PC-9 (cell line): ENCODE measurements at regions of chr21 and their contacts with region 1.

Region 1: GRCh38 chr21:41816220-41817165 is 49.6 kb upstream of the RIPK4 start:
- DNase-seq: peak in 1 of 2 experiments; percentile 19
- H3K4me3 ChIP-seq: no peak overlapping the region
- H3K27ac ChIP-seq: peak overlapping the region; percentile 65
- H3K4me1 ChIP-seq: peaks cover 9% of the 10 kb centered on the region
- H3K27me3 ChIP-seq: no peaks in the 10 kb centered on the region
- CTCF ChIP-seq: no peak

Region 2: GRCh38 chr21:40768056-40768455 is 1048.4 kb before region 1 on chr21:
- CTCF ChIA-PET with region 1: no interaction called
- POLR2A ChIA-PET with region 1: no interaction called
- intact Hi-C with region 1: no loop called
- DNase-seq: no peak
- H3K4me3 ChIP-seq: no peak overlapping the region
- H3K27ac ChIP-seq: no peak overlapping the region
- H3K4me1 ChIP-seq: no peaks in the 10 kb centered on the region
- H3K27me3 ChIP-seq: 0 out of 2 replicates have a peak, but pooled peaks cover 9% of the 10 kb centered on the region
- CTCF ChIP-seq: no peak

Region 3: DNA sequence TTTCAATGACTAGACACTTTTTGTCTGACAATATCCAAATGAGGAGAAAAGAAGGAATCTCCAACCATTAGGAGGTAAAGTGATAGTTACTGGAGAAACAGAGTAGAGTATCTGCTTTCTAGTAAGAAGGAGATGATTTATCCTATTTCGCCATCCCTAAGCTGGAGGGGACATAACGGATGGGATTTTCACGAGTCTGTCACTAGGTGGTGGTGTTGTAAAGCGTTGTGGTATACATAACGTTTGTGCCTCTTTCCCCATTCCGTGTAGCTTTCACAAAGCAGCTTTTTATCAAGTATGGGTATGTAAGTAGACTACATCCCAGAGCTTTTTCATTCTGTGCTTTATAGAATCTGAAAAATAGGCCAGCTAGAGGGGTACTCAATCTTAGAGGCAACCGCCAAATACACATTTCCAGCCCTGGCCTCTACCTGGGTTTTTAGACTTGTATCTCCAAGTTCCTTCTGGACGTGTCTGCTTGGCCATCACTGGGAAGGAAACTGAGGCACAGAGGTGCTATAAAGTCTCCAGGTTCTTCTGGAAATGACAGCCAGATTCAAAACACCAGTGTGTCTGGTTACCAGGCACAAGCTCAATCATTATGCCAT is 533.2 kb before region 1 on chr21:
- CTCF ChIA-PET with region 1: interaction called, 4 read pairs
- POLR2A ChIA-PET with region 1: no interaction called
- intact Hi-C with region 1: loop called (anchors 2 kb)
- DNase-seq: peak; percentile 43 to 69
- H3K4me3 ChIP-seq: no peak overlapping the region
- H3K27ac ChIP-seq: no peak overlapping the region
- H3K4me1 ChIP-seq: no peaks in the 10 kb centered on the region
- H3K27me3 ChIP-seq: no peaks in the 10 kb centered on the region
- CTCF ChIP-seq: peak; percentile 76

Region 4: GRCh38 chr21:41477641-41478318 is 338.7 kb before region 1 on chr21:
- CTCF ChIA-PET with region 1: no interaction called
- POLR2A ChIA-PET with region 1: no interaction called
- intact Hi-C with region 1: loop called (anchors 2 kb)
- DNase-seq: peak; percentile 40 to 49
- H3K4me3 ChIP-seq: no peak overlapping the region
- H3K27ac ChIP-seq: peak overlapping the region; percentile 23; the same call in 1 of the 2 replicates
- H3K4me1 ChIP-seq: peaks cover 11% of the 10 kb centered on the region
- H3K27me3 ChIP-seq: no peaks in the 10 kb centered on the region
- CTCF ChIP-seq: no peak

Region 5: GRCh38 chr21:41726945-41727783 is 89.3 kb before region 1 on chr21:
- CTCF ChIA-PET with region 1: no interaction called
- POLR2A ChIA-PET with region 1: no interaction called
- intact Hi-C with region 1: loop called (anchors 1 kb)
- DNase-seq: peak; percentile 89 to 93
- H3K4me3 ChIP-seq: peak overlapping the region; percentile 27; the same call in 1 of the 2 replicates
- H3K27ac ChIP-seq: peak overlapping the region; percentile 93
- H3K4me1 ChIP-seq: peaks cover 56% of the 10 kb centered on the region
- H3K27me3 ChIP-seq: no peaks in the 10 kb centered on the region
- CTCF ChIP-seq: peak; percentile 37; the same call in 1 of the 2 replicates

Region 6: DNA sequence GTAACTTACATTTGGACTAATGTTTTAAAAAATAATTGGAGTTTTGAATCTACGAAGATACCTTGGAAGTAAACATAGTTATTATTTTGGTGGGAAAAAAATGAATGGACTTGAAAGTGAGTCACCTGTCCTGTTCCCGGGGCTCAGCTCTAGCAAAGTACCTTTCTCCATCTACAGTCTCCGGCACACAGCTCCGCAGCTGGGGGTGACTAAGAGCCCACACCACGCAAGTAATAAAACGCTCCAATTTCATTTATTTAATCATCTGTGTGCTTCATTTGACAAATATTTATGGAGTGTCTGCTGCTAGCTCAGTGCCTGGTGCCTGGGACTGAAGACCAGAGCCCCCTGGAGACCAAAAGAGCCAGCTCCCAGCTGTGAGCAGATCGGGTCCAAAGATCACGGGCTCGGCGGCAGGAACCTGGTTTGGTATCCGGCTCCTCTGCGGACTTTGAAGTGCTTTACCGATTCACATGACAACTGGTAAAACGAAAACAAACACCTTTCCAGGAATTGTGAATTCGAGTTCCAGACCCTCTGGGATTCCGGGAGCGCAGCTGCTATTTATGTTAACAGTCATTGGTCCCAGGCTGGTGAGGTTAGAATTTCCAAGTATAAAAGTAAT is 47.9 kb before region 1 on chr21:
- CTCF ChIA-PET with region 1: no interaction called
- POLR2A ChIA-PET with region 1: no interaction called
- intact Hi-C with region 1: loop called (anchors 2 kb)
- DNase-seq: peak; percentile 28 to 80
- H3K4me3 ChIP-seq: peak overlapping the region; percentile 100
- H3K27ac ChIP-seq: peak overlapping the region; percentile 99
- H3K4me1 ChIP-seq: peaks cover 12% of the 10 kb centered on the region
- H3K27me3 ChIP-seq: no peaks in the 10 kb centered on the region
- CTCF ChIP-seq: no peak; the same call in 1 of the 2 replicates

Region 7: DNA sequence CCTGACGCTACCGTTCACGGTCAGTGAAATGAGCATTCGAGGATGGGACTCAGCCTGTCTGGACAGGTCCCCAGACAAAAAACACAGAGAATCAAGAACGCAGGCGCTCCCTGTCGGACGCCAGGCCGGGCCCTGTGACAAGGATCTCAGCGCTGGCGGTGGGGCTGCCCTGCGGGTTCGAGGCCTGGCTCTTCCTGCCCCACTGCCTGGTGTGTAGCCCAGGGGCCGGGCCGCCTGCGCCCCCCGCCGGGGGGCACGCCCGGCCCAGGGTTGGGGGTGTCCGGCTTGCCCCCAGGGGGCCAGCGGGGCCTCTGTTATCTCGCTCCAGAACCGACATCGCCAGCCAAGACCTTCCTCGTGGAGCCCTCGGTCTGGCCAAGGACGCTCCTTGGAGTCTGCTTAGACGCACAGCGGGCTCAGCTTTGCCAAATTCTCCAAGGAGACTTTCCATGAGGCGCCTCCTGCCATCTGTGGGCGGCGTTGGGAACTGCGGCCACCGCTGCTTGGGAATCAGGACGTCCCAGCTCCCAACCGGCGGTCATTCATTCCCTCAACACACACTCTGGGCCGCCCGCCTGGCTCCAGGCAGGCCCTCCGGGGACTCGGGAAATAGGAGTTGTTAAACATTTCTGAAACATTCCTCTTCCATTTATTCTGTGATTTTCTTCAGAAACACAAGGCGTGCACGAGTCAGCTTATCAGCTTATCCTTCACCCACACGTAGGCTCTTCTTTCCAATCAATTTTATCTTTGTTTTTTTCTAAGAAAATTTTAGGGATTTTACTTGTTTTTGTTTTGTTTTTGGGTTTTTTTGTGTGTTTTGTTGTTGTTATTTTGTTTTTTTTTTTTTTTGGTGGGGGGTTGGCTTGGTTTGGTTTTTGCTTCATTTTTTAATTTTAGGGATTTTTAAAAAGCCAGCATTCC is 38.3 kb before region 1 on chr21:
- CTCF ChIA-PET with region 1: interaction called, 16 read pairs
- POLR2A ChIA-PET with region 1: no interaction called
- intact Hi-C with region 1: loop called (anchors 2 kb)
- DNase-seq: peak; percentile 62 to 81
- H3K4me3 ChIP-seq: no peak overlapping the region
- H3K27ac ChIP-seq: peak overlapping the region; percentile 13; the same call in 1 of the 2 replicates
- H3K4me1 ChIP-seq: peaks cover 42% of the 10 kb centered on the region
- H3K27me3 ChIP-seq: no peaks in the 10 kb centered on the region
- CTCF ChIP-seq: peak; percentile 75

Region 8: DNA sequence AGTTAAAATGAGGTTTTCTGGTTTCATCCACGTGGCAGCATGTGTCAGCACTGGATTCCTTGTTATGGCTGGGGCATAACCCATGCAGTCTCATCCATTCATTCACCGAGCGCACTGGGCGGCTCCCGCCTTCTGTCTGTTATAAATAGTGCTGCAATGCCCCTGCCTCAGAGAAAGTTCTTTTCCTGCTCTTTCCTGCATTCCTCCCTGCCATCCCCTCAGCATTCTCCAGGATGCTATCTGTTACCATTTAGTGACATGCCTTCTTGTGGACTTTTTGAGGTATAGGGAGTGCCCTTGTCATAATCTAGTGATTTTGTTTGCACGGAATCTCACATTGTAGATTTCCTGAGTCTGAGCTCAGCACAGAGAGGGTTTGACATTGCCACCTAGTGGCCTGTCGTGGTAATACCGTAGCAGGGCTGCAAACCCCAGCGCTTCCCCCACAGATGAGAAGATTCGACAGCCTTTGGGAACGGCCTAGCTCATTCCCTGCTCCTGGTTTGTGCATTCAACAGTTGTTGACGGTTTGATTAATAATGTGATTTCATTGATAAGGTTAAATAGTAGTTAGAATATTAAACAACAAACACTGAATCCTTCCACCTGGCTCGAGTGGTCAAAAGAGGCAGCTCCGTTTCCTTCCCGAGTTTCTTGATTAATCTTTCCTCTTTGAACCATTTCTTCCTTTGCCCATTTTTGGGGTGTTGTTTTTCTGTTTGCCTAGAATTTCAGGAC is 300.9 kb after region 1 on chr21:
- CTCF ChIA-PET with region 1: no interaction called
- POLR2A ChIA-PET with region 1: no interaction called
- intact Hi-C with region 1: loop called (anchors 5 kb)
- DNase-seq: peak; percentile 47 to 69
- H3K4me3 ChIP-seq: no peak overlapping the region
- H3K27ac ChIP-seq: no peak overlapping the region
- H3K4me1 ChIP-seq: peaks cover 32% of the 10 kb centered on the region
- H3K27me3 ChIP-seq: no peaks in the 10 kb centered on the region
- CTCF ChIP-seq: peak; percentile 89